Transverse colon (tissue), 4 donors: ENCODE measurements at regions of chr21 and their contacts with region 1.

Region 1: GRCh38 chr21:41777951-41778874 is 11.4 kb upstream of the RIPK4 start:
- DNase-seq: peak; percentile 90
- H3K4me3 ChIP-seq: no peak overlapping the region
- H3K27ac ChIP-seq: peak overlapping the region in 1 of 4 donors; percentile 8
- H3K4me1 ChIP-seq: peaks cover 11 to 26% (median 19%) of the 10 kb centered on the region in 4 donors
- H3K27me3 ChIP-seq: peaks cover 87% of the 10 kb centered on the region
- CTCF ChIP-seq: peak; percentile 92 to 95 (median 92)
- EP300 ChIP-seq: no peak
- POLR2A ChIP-seq: no peak

Region 2: DNA sequence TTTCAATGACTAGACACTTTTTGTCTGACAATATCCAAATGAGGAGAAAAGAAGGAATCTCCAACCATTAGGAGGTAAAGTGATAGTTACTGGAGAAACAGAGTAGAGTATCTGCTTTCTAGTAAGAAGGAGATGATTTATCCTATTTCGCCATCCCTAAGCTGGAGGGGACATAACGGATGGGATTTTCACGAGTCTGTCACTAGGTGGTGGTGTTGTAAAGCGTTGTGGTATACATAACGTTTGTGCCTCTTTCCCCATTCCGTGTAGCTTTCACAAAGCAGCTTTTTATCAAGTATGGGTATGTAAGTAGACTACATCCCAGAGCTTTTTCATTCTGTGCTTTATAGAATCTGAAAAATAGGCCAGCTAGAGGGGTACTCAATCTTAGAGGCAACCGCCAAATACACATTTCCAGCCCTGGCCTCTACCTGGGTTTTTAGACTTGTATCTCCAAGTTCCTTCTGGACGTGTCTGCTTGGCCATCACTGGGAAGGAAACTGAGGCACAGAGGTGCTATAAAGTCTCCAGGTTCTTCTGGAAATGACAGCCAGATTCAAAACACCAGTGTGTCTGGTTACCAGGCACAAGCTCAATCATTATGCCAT is 494.9 kb before region 1 on chr21:
- in situ Hi-C with region 1: no loop called
- intact Hi-C with region 1: loop called (anchors 5 kb)
- DNase-seq: peak; percentile 50
- H3K4me3 ChIP-seq: no peak overlapping the region
- H3K27ac ChIP-seq: no peak overlapping the region
- H3K4me1 ChIP-seq: no peaks in the 10 kb centered on the region
- H3K27me3 ChIP-seq: peaks cover 15% of the 10 kb centered on the region
- CTCF ChIP-seq: peak; percentile 69 to 87 (median 77)
- EP300 ChIP-seq: no peak
- POLR2A ChIP-seq: no peak

Region 3: GRCh38 chr21:41612674-41613532 is 165.3 kb before region 1 on chr21:
- in situ Hi-C with region 1: loop called in 1 of 4 experiments (anchors 5 kb)
- intact Hi-C with region 1: loop called (anchors 2 kb)
- DNase-seq: peak; percentile 57
- H3K4me3 ChIP-seq: no peak overlapping the region
- H3K27ac ChIP-seq: peak overlapping the region; percentile 20 to 60 (median 52)
- H3K4me1 ChIP-seq: peaks cover 8 to 39% (median 12%) of the 10 kb centered on the region in 4 donors
- H3K27me3 ChIP-seq: peaks cover 11% of the 10 kb centered on the region
- CTCF ChIP-seq: peak; percentile 67 to 75 (median 72)
- EP300 ChIP-seq: peak; percentile 20
- POLR2A ChIP-seq: no peak

Region 4: GRCh38 chr21:41622831-41623548 is 155.2 kb before region 1 on chr21:
- in situ Hi-C with region 1: loop called in 3 of 4 experiments (anchors 10 to 25 kb)
- intact Hi-C with region 1: no loop called
- DNase-seq: no peak
- H3K4me3 ChIP-seq: no peak overlapping the region
- H3K27ac ChIP-seq: no peak overlapping the region
- H3K4me1 ChIP-seq: no peaks in the 10 kb centered on the region
- H3K27me3 ChIP-seq: peaks cover 80% of the 10 kb centered on the region
- CTCF ChIP-seq: no peak
- EP300 ChIP-seq: no peak
- POLR2A ChIP-seq: no peak

Region 5: GRCh38 chr21:41641821-41642701 is 136.2 kb before region 1 on chr21:
- in situ Hi-C with region 1: loop called in 1 of 4 experiments (anchors 25 kb)
- intact Hi-C with region 1: no loop called
- DNase-seq: no peak
- H3K4me3 ChIP-seq: no peak overlapping the region
- H3K27ac ChIP-seq: peak overlapping the region; percentile 28 to 57 (median 48)
- H3K4me1 ChIP-seq: peaks cover 0 to 7% (median 3%) of the 10 kb centered on the region in 4 donors
- H3K27me3 ChIP-seq: peaks cover 21% of the 10 kb centered on the region
- CTCF ChIP-seq: no peak
- EP300 ChIP-seq: no peak
- POLR2A ChIP-seq: no peak